Right ventricle myocardium superior (tissue), 1 donor: ENCODE measurements at regions of chr1 and their contacts with region 1.

Region 1: DNA sequence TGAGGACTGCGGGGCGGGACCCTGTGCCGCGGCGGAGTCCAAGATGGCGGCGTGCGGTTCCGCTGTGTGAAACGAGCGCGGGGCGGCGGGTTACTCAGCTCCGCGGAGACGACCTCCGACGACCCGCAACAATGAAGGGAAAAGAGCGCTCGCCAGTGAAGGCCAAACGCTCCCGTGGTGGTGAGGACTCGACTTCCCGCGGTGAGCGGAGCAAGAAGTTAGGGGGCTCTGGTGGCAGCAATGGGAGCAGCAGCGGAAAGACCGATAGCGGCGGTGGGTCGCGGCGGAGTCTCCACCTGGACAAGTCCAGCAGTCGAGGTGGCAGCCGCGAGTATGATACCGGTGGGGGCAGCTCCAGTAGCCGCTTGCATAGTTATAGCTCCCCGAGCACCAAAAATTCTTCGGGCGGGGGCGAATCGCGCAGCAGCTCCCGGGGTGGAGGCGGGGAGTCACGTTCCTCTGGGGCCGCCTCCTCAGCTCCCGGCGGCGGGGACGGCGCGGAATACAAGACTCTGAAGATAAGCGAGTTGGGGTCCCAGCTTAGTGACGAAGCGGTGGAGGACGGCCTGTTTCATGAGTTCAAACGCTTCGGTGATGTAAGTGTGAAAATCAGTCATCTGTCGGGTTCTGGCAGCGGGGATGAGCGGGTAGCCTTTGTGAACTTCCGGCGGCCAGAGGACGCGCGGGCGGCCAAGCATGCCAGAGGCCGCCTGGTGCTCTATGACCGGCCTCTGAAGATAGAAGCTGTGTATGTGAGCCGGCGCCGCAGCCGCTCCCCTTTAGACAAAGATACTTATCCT is 430 bp downstream of the RBM15 start:
- DNase-seq: peak; percentile 67
- ATAC-seq: no peak

Region 2: GRCh38 chr1:110407260-110408210 is 67.9 kb after region 1 on chr1 and contains the start of gene LAMTOR5:
- intact Hi-C with region 1: loop called (anchors 5 kb)
- DNase-seq: peak; percentile 96
- ATAC-seq: peak; percentile 97
- total RNA-seq, gene LAMTOR5: 256 TPM

Region 3: GRCh38 chr1:110555807-110556470 is 216.3 kb after region 1 on chr1:
- intact Hi-C with region 1: no loop called
- DNase-seq: peak; percentile 80
- ATAC-seq: peak; percentile 81

Region 4: GRCh38 chr1:110570307-110570706 is 230.7 kb after region 1 on chr1:
- intact Hi-C with region 1: no loop called
- DNase-seq: no peak
- ATAC-seq: no peak